ENCODE measurements at regions of chr11 and their contacts with region 1.

Region 1: GRCh38 chr11:59822989-59823566 is 12.5 kb upstream of the MRPL16 start:
- DNase-seq: no peak
- ATAC-seq: peak; percentile 63
- H3K4me3 ChIP-seq: peak overlapping the region in 1 of 2 donors; percentile 8
- H3K27ac ChIP-seq: no peak overlapping the region
- H3K4me1 ChIP-seq: no peaks in the 10 kb centered on the region
- H3K27me3 ChIP-seq: no peaks in the 10 kb centered on the region

Region 2: GRCh38 chr11:59891781-59892181 is 68.7 kb after region 1 on chr11:
- intact Hi-C with region 1: no loop called
- DNase-seq: no peak
- ATAC-seq: no peak
- H3K4me3 ChIP-seq: no peak overlapping the region
- H3K27ac ChIP-seq: no peak overlapping the region
- H3K4me1 ChIP-seq: no peaks in the 10 kb centered on the region
- H3K27me3 ChIP-seq: no peaks in the 10 kb centered on the region

Region 3: DNA sequence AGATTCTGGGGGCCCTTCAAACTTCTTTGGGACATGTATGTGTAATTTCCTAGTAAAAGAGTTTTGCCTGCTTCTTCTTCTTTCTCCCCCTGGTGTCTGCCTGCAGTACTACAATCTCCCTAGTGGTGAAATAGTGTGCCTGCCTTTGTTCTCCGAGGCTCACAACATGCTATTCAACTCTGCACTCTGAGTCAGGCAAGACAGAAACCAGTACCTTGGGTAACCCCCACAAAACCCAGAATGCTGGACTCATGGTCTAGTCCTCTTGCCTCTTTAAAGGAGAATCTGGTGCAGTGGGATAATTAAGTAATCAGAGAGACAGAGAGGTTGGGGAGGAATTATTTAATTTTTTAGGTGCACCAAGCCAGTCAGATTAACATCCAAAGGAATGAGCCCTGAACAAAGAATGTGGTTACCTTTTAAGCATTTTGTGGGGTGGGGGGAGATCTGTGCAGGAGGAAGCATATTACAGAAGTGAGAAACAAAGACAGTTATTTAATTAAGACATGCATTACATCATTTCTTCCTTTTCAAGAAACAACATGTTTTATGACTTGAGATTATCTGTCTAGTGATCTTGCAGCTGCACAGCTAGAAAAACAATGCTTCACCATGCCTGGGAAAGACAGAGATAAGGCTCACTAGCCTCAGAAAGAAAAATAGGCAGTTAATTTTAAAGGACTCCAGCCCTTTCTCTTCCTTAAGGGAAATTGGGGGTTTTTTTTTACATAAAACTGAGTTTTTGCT is 370.8 kb after region 1 on chr11:
- intact Hi-C with region 1: loop called (anchors 5 kb)
- DNase-seq: peak in 1 of 2 donors; percentile 53
- ATAC-seq: peak; percentile 80
- H3K4me3 ChIP-seq: no peak overlapping the region
- H3K27ac ChIP-seq: no peak overlapping the region
- H3K4me1 ChIP-seq: no peaks in the 10 kb centered on the region
- H3K27me3 ChIP-seq: peaks cover 0 to 1% of the 10 kb centered on the region in 2 donors

Region 4: DNA sequence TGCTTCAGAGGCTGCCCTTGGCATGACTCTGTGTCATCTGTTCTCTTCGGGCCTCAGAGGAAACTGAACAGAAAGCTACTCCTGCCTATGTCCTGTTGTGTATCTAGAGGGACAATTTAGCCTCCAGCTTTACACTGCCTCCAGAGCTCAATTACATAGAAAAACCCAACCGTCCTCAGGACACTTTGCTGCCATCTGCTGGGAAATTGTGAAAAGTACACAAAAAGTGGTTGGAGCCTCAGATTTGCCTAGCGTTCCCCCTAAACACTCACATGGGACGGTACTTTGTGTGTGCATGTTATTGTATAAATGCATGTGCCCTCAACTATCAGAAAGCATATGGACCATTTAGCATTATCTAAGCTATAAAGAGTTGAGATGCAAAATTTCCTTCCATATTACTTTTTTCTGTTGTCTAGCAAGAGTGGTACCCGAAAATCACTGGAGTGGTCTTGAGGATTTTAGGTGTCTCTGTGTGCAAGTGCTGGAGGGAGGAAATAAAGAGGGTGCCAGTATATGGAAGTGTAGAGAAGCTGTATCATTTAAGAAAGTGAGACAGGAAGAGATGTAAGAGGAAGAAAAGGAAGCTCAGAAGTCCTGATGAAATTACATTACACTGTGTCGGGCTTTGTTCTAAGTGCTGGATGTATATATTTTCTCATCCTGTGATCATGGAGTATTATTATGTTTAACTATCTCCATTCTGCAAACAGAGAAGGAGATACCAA is 428.6 kb after region 1 on chr11:
- intact Hi-C with region 1: loop called in 1 of 2 experiments (anchors 10 kb)
- DNase-seq: no peak
- ATAC-seq: no peak
- H3K4me3 ChIP-seq: no peak overlapping the region
- H3K27ac ChIP-seq: no peak overlapping the region
- H3K4me1 ChIP-seq: no peaks in the 10 kb centered on the region
- H3K27me3 ChIP-seq: no peaks in the 10 kb centered on the region